ENCODE measurements at regions of chr7 and their contacts with region 1.

Region 1: DNA sequence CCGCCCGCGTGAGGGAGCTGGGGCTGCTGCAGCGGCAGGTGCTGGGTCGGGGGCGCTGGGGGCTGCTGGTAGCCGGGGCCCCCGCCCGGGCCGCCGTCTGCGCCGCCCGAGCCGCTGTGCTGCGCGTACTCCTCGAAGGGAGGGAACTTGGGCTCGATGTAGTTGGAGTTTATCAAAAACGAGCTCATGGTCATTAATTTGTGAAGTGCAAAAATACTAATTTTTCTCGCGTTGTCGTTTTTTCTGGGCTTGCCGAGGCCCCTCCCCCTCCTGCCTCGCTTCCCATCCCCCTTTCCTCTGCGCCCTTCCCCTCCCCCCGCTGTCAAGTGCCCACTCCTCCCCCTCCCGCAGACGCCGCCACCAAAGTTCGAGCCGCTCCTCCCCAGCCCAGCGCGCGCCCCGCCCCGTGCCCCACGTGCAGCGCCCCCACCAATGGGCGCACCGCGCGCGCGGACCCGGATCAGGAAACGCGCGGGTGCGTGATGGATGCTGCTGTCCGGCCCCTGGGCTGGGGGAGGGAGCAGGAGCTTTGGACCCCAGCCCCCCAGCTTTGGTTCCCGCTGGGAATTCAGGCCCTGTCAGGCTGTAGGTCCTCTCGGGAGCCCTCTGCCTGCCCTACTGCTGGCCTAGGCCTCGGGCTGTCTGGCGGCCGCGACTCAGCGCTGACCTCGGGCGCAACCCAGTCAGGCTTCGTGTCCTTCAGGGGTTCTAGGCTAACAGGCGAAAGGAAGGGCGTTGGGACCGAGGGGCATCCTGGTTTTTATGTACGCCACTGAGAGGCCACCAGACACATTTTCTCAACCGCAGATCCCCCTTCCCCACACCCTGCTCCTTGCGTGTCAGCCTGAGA is at the start of gene HOXA4:
- DNase-seq: peak; percentile 93
- H3K4me3 Mint-ChIP-seq: peak within 1 kb of the TSS; percentile 80
- H3K27ac Mint-ChIP-seq: peak within 1 kb of the TSS; percentile 51
- H3K4me1 Mint-ChIP-seq: peaks cover 32% of the 10 kb centered on the region
- H3K27me3 Mint-ChIP-seq: no peaks in the 10 kb centered on the region
- CTCF ChIP-seq: no peak
- total RNA-seq, gene HOXA4: 2.6 and 3.7 TPM in 2 replicates

Region 2: GRCh38 chr7:27112955-27113949 is 17.5 kb before region 1 on chr7:
- CTCF ChIA-PET with region 1: interaction called, 19 read pairs
- POLR2A ChIA-PET with region 1: interaction called, 18 read pairs
- intact Hi-C with region 1: loop called (anchors 1 kb)
- DNase-seq: peak; percentile 93
- H3K4me3 Mint-ChIP-seq: peak overlapping the region; percentile 80
- H3K27ac Mint-ChIP-seq: peak overlapping the region; percentile 90
- H3K4me1 Mint-ChIP-seq: peaks cover 25% of the 10 kb centered on the region
- H3K27me3 Mint-ChIP-seq: no peaks in the 10 kb centered on the region
- CTCF ChIP-seq: no peak

Region 3: DNA sequence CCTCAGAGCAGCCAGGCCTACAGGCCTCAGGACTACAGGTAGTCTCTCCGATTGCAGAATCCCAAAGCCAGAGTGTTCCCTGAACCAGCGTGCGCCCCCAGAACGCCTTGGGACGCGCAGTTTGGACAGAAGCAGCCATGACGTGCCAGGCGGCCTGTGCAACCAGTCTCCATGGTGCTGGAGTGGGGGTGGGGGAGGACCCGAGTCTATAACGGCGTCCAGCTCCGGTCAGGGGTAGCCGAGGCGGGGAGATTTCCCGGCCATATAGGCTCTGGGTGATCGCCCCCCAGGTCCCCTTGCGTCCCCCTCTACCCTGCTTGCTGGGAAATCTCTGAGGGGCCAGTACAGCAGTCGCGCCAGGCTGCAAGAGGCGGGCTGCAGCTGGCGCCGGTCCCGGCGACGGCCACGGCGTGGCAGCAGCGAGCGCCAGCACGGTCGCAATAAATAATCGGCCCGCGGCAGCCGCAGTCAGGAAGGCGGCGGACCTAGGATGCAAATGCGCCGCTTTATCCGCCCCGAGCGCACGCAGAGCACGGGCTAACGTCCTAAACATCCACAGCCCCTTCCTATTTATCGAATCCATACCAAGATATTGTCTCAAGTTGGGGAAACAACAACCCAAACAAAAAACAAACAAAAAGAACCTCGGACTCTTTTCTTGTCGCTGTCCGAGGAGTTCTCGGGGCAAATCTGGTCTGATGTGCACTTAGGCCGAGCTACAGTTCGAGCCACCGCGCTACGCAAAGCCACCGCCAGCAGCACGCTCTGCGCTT is 20.0 kb after region 1 on chr7:
- CTCF ChIA-PET with region 1: no interaction called
- POLR2A ChIA-PET with region 1: interaction called, 11 read pairs
- intact Hi-C with region 1: no loop called
- DNase-seq: peak; percentile 72
- H3K4me3 Mint-ChIP-seq: peak overlapping the region; percentile 79
- H3K27ac Mint-ChIP-seq: no peak overlapping the region
- H3K4me1 Mint-ChIP-seq: peaks cover 15% of the 10 kb centered on the region
- H3K27me3 Mint-ChIP-seq: no peaks in the 10 kb centered on the region
- CTCF ChIP-seq: peak; percentile 89

Region 4: DNA sequence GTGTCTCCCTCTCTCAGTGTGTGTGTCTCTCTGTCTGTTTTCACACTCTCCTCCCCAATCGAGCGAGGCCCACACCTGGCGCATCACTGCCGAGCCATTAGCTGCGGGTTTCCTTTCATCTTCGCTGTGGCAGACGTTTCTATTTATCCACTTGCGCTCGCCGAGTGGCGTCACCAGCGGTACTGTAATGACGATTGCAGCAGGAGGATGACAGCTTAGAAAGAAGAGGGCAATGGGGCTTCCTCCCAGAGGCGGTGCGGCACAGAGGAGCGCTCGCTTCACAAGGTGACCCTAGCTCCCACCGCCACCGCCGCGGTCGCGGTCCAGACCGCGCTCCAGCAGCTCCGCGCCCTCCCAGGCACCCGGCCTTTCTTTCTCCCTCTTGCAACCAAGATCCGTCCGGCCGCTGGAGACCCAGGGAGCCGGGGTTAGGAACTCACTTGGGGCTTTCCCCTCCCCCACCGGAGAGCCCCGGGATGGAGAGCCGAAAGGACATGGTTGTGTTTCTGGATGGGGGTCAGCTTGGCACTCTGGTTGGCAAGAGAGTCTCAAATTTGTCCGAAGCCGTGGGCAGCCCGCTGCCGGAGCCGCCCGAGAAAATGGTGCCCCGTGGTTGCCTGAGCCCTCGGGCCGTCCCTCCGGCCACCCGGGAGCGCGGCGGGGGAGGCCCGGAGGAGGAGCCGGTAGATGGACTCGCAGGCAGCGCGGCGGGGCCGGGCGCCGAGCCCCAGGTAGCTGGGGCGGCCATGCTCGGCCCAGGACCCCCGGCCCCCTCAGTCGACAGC is 112.0 kb after region 1 on chr7 and contains the start of gene EVX1:
- CTCF ChIA-PET with region 1: no interaction called
- POLR2A ChIA-PET with region 1: no interaction called
- intact Hi-C with region 1: no loop called
- DNase-seq: no peak
- H3K4me3 Mint-ChIP-seq: no peak within 1 kb of the TSS
- H3K27ac Mint-ChIP-seq: no peak within 1 kb of the TSS
- H3K4me1 Mint-ChIP-seq: peaks cover 6% of the 10 kb centered on the region
- H3K27me3 Mint-ChIP-seq: peaks cover 53% of the 10 kb centered on the region
- CTCF ChIP-seq: no peak
- total RNA-seq, gene EVX1: not detected in 2 replicates

Measured in MCF 10A (cell line).